ENCODE measurements at regions of chr2 and their contacts with region 1.

Region 1: GRCh38 chr2:108637304-108637669 is 82.0 kb upstream of the RANBP2 start:
- DNase-seq: no peak
- H3K4me3 Mint-ChIP-seq: no peak overlapping the region
- H3K27ac Mint-ChIP-seq: no peak overlapping the region
- H3K4me1 Mint-ChIP-seq: peaks cover 74% of the 10 kb centered on the region
- H3K27me3 Mint-ChIP-seq: no peaks in the 10 kb centered on the region
- CTCF ChIP-seq: no peak

Region 2: DNA sequence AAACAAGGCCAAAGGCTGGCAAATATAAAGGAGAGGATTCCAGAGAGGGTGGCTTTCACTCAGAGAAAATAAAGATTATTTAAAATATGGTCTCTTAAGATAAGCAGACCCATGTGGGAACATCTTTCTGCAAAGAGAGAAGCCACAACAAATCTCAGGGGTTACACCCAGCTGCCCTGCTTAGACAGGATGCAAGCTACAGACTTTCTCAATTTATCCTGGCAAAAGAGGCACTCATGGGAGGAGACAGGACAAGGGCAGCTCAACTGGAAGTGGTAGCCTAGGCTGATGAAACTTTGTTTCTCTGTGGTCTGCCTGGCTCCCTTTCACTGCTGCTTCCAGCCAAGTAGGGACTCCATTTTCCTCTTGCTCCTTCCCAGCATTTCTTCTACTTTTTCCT is 285.4 kb before region 1 on chr2:
- CTCF ChIA-PET with region 1: no interaction called
- intact Hi-C with region 1: loop called (anchors 1 kb)
- DNase-seq: no peak
- H3K4me3 Mint-ChIP-seq: no peak overlapping the region
- H3K27ac Mint-ChIP-seq: no peak overlapping the region
- H3K4me1 Mint-ChIP-seq: no peaks in the 10 kb centered on the region
- H3K27me3 Mint-ChIP-seq: no peaks in the 10 kb centered on the region
- CTCF ChIP-seq: no peak

Region 3: GRCh38 chr2:108577099-108577498 is 60.2 kb before region 1 on chr2:
- CTCF ChIA-PET with region 1: no interaction called
- intact Hi-C with region 1: no loop called
- DNase-seq: no peak
- H3K4me3 Mint-ChIP-seq: no peak overlapping the region
- H3K27ac Mint-ChIP-seq: no peak overlapping the region
- H3K4me1 Mint-ChIP-seq: peaks cover 43% of the 10 kb centered on the region
- H3K27me3 Mint-ChIP-seq: no peaks in the 10 kb centered on the region
- CTCF ChIP-seq: no peak

Region 4: DNA sequence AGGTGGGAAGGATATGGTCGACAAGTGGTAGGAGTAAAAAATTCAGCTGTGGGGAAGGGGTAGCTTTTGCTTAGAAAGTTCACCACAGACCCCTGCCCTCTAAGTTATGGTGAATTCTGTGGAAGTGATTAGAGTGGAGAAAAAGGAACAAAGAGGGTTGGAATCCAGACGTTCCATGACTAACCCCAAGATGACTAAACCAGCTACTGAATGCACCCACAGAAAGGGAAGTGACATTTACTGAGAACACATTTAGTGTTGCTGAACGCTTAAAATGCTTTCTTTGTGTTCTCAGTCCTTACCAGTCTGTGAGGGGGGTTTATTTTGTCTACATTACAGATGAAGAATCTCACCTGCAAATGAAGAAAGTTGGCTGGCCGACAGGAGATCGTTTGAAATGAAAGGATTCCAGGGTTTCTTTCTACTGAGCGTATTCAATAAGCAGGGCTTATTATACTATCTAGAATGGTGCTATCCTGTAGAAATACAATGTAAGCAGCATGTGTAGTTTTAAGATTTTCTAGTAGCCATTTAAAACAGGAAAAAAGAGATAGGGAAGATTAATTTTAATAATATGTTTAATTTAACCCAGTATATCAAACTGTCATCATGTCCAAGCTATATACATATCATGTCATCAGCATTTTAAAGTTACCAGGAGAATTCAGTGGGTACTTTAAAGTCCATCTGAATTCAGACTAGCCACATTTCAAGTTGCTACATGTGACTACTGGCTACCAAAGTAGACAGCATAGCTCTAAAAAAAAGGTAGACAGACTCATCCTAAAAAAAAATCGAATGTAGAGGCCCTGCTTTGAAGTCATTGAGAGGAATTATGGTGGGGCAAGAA is 42.9 kb before region 1 on chr2:
- CTCF ChIA-PET with region 1: interaction called, 18 read pairs
- intact Hi-C with region 1: loop called (anchors 1 kb)
- DNase-seq: peak; percentile 48
- H3K4me3 Mint-ChIP-seq: peak overlapping the region; percentile 68
- H3K27ac Mint-ChIP-seq: peak overlapping the region; percentile 92
- H3K4me1 Mint-ChIP-seq: peaks cover 72% of the 10 kb centered on the region
- H3K27me3 Mint-ChIP-seq: no peaks in the 10 kb centered on the region
- CTCF ChIP-seq: no peak

Region 5: GRCh38 chr2:108607706-108608301 is 29.5 kb before region 1 on chr2:
- CTCF ChIA-PET with region 1: interaction called, 17 read pairs
- intact Hi-C with region 1: loop called (anchors 1 kb)
- DNase-seq: peak; percentile 47
- H3K4me3 Mint-ChIP-seq: no peak overlapping the region
- H3K27ac Mint-ChIP-seq: no peak overlapping the region
- H3K4me1 Mint-ChIP-seq: peaks cover 42% of the 10 kb centered on the region
- H3K27me3 Mint-ChIP-seq: no peaks in the 10 kb centered on the region
- CTCF ChIP-seq: peak; percentile 45

Region 6: GRCh38 chr2:108621087-108621559 is 16.2 kb before region 1 on chr2:
- CTCF ChIA-PET with region 1: interaction called, 45 read pairs
- intact Hi-C with region 1: no loop called
- DNase-seq: peak; percentile 61
- H3K4me3 Mint-ChIP-seq: peak overlapping the region; percentile 65
- H3K27ac Mint-ChIP-seq: peak overlapping the region; percentile 80
- H3K4me1 Mint-ChIP-seq: peaks cover 69% of the 10 kb centered on the region
- H3K27me3 Mint-ChIP-seq: no peaks in the 10 kb centered on the region
- CTCF ChIP-seq: no peak